Calu3 (cell line): ENCODE measurements at regions of chr10 and their contacts with region 1.

Region 1: DNA sequence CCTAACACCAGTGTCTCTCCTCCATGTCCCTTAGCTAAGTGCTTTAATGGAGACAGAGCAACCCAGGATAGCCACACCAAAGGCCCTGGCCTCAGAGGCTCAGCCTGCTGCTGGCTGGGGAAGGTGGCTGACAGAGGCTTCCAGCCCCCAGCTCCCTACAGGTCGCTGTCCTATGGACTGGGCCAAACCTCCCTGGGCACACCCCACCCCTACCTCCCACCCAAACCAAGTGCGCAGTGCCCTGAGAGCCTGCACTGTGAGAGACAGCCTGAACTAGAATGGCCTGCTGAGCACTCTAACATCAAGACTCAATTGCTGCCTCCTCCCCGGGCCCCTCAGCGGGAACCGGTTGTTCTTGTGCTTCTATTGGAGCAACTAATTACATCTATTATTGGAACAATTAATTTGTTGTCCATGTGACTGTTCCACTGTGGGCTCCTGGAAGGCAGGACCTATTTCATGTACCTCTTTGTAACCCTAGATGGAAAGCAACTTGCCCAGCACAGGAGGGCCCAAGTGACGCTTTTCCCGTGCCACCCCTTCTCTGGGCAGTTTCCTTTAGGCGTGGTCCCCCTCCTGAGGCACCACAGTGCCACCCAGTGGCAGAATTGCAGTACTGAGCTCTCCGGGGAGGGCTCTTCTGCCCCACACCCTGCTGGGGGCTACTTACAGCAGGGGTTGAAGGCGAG is 63.6 kb upstream of the WAPL start:
- DNase-seq: peak; percentile 72
- H3K4me3 Mint-ChIP-seq: no peak overlapping the region
- H3K27ac Mint-ChIP-seq: no peak overlapping the region
- H3K4me1 Mint-ChIP-seq: no peaks in the 10 kb centered on the region
- H3K27me3 Mint-ChIP-seq: no peaks in the 10 kb centered on the region
- CTCF ChIP-seq: peak; percentile 80

Region 2: GRCh38 chr10:86261941-86262687 is 323.1 kb before region 1 on chr10:
- CTCF ChIA-PET with region 1: no interaction called
- intact Hi-C with region 1: loop called (anchors 10 kb)
- DNase-seq: peak; percentile 60
- H3K4me3 Mint-ChIP-seq: no peak overlapping the region
- H3K27ac Mint-ChIP-seq: no peak overlapping the region
- H3K4me1 Mint-ChIP-seq: no peaks in the 10 kb centered on the region
- H3K27me3 Mint-ChIP-seq: peaks cover 46% of the 10 kb centered on the region
- CTCF ChIP-seq: no peak

Region 3: GRCh38 chr10:86472061-86472460 is 113.1 kb before region 1 on chr10:
- CTCF ChIA-PET with region 1: no interaction called
- intact Hi-C with region 1: no loop called
- DNase-seq: no peak
- H3K4me3 Mint-ChIP-seq: no peak overlapping the region
- H3K27ac Mint-ChIP-seq: no peak overlapping the region
- H3K4me1 Mint-ChIP-seq: no peaks in the 10 kb centered on the region
- H3K27me3 Mint-ChIP-seq: no peaks in the 10 kb centered on the region
- CTCF ChIP-seq: no peak

Region 4: GRCh38 chr10:86521678-86522509 is 63.3 kb before region 1 on chr10 and contains the start of gene WAPL:
- CTCF ChIA-PET with region 1: interaction called, 3 read pairs
- intact Hi-C with region 1: loop called (anchors 1 kb)
- DNase-seq: peak; percentile 93
- H3K4me3 Mint-ChIP-seq: peak within 1 kb of the TSS; percentile 91
- H3K27ac Mint-ChIP-seq: peak within 1 kb of the TSS; percentile 87
- H3K4me1 Mint-ChIP-seq: peaks cover 24% of the 10 kb centered on the region
- H3K27me3 Mint-ChIP-seq: no peaks in the 10 kb centered on the region
- CTCF ChIP-seq: no peak
- total RNA-seq, gene WAPL: 27.0 and 30.1 TPM in 2 replicates